Vagina (tissue), 2 donors: ENCODE measurements at regions of chr19 and their contacts with region 1.

Region 1: GRCh38 chr19:17947815-17948513 is 15.1 kb downstream of the CCDC124 start:
- DNase-seq: no peak
- H3K4me3 ChIP-seq: peak overlapping the region; percentile 56 to 67
- H3K27ac ChIP-seq: peak overlapping the region; percentile 57
- H3K4me1 ChIP-seq: peaks cover 53% of the 10 kb centered on the region
- H3K27me3 ChIP-seq: peaks cover 18% of the 10 kb centered on the region
- CTCF ChIP-seq: no peak
- POLR2A ChIP-seq: no peak

Region 2: DNA sequence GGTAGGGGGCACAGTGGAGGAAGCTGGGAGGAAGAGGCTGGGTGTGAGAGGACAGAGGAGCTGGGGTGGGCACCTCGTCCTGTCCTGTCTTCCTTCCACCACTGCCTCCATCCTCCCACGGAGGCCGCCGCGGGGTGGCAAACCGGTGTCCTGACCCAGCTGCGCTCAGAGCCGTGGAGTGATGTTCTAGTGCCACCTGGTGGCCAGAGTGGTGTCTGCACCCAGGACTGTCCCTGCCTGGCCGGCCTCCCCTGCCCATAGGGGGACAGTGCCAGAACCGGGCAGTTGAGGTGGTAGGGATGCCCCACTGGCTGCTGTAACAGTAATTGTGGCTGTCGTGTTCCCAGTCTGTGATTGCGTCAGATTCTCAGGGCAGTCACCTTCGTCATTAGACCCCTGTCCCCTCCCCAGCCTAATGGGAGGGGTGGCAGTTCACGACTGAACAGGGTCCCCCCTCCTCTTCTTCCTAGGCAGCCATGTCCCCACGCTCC is 48.9 kb after region 1 on chr19:
- intact Hi-C with region 1: loop called (anchors 5 kb)
- DNase-seq: no peak
- H3K4me3 ChIP-seq: no peak overlapping the region
- H3K27ac ChIP-seq: no peak overlapping the region
- H3K4me1 ChIP-seq: peaks cover 14% of the 10 kb centered on the region
- H3K27me3 ChIP-seq: no peaks in the 10 kb centered on the region
- CTCF ChIP-seq: peak; percentile 97 to 100 (median 98)
- POLR2A ChIP-seq: no peak

Region 3: DNA sequence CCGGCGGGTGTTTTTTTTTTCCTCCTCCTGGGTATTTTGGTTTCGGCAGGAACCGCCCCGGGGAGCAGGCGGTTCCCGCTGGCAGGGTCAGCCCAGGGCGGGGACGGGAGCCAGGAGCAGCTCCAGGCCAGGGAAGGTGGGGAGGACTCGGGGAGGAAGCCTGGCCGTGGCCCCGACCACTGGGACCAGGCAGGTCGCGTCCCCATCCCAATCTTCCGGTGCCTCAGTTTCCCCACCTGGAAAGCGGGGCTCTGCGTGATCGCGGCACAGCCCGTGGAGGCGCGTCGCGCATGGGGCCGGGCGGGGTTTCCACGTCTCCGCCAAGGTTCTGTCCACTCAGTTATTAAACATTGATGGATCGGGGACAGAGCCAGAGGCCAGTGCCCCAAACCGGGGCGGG is 103.9 kb after region 1 on chr19:
- intact Hi-C with region 1: loop called (anchors 2 kb)
- DNase-seq: no peak
- H3K4me3 ChIP-seq: peak overlapping the region in 1 of 2 donors; percentile 10
- H3K27ac ChIP-seq: peak overlapping the region; percentile 56
- H3K4me1 ChIP-seq: peaks cover 25% of the 10 kb centered on the region
- H3K27me3 ChIP-seq: no peaks in the 10 kb centered on the region
- CTCF ChIP-seq: no peak
- POLR2A ChIP-seq: no peak

Region 4: DNA sequence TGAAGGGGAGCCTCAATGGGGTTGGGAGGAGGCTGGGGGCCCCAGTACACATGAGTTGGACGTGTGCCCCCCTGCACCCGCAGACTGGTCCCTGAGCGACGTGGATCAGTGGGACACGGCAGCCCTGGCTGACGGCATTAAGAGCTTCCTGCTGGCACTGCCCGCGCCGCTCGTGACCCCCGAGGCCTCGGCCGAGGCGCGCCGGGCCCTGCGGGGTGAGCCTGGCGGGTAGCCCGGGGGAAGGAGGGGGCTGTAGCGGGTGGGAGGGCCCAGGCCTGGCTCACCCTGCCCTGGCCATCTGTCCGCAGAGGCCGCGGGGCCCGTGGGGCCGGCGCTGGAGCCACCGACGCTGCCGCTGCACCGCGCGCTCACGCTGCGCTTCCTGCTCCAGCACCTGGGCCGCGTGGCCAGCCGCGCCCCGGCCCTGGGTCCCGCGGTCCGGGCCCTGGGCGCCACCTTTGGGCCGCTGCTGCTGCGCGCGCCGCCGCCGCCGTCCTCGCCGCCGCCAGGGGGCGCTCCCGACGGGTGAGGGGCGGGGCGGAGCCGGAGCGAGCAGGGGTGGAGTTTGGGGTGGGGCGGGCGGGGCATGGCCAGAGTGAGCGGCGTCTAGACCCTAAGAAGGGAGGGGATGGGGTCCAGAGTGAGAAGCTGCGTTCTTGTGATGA is 213.1 kb after region 1 on chr19:
- intact Hi-C with region 1: no loop called
- DNase-seq: no peak
- H3K4me3 ChIP-seq: peak overlapping the region; percentile 40 to 64
- H3K27ac ChIP-seq: peak overlapping the region; percentile 73
- H3K4me1 ChIP-seq: peaks cover 41% of the 10 kb centered on the region
- H3K27me3 ChIP-seq: no peaks in the 10 kb centered on the region
- CTCF ChIP-seq: peak in 1 of 3 experiments; percentile 55
- POLR2A ChIP-seq: no peak